HEK293T (cell line): ENCODE measurements at regions of chr1 and their contacts with region 1.

Region 1: DNA sequence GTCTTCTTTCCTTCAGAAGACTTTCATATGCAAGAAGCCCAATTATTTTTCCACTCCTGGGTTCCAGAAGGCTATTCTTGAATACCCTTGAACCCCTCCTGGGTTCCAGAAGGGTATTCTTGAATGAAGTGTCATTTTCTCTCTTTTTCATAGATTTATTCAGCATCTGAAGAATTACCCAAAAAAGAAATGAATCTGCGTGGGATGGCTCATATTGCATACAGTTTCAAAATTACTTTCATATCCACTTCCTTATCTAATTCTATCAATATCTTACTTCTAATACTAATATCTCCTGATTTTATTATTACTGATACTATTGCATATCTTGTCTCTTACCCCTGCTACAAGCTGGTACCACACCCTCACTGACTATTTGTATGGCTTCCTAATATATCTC is 22.6 kb upstream of the RABGAP1L start:
- DNase-seq: no peak

Region 2: DNA sequence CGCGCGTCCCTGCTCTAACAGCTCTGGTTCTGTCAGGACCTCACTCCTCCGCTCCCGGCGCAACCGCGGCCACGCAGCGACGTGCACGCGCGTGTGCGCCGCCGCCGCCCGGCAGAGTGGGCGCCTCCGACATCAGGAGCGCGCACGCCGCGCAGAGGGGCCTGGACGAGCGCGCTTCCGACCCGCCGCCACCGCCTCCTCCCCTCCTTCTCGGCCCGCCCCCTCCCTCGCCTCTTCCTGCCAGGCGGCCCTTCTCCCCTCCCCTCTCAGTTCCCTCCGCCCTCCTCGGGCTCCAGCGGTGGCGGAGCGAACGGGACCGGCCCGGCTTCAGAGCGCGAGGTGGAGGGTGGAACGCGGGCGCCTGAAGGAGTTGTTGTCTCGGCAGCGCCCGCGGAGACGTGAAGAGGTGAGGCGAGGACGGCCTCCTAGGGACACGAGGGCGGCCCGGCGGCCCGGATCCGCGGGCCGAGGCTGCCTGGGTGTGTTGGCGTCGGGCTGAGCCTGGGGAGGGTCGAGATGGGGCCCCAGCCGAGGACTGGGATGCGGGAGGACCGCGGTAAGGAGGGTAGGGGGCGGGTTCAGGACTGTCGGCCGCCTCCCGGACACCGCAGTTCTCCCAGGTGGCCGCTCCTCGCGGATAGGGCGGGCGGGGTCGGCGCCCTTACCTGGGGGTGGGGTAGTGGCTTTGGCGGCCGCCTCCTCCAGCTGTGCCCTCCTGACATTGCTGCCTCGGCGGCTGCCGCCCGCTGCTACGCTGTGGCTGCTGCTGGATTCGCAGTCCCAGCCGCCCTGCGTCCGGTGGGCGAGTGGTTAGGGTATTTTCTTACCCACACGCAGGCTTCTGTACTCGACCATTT is 22.8 kb after region 1 on chr1 and contains the start of gene RABGAP1L:
- CTCF ChIA-PET with region 1: interaction called, 10 read pairs
- POLR2A ChIA-PET with region 1: no interaction called
- DNase-seq: peak; percentile 93